ENCODE measurements at regions of chr11 and their contacts with region 1.

Region 1: GRCh38 chr11:20134991-20135736 is 25.1 kb downstream of the DBX1 start:
- DNase-seq: no peak
- H3K4me3 Mint-ChIP-seq: no peak overlapping the region
- H3K27ac Mint-ChIP-seq: no peak overlapping the region
- H3K4me1 Mint-ChIP-seq: peaks cover 10% of the 10 kb centered on the region
- H3K27me3 Mint-ChIP-seq: peaks cover 33% of the 10 kb centered on the region

Region 2: DNA sequence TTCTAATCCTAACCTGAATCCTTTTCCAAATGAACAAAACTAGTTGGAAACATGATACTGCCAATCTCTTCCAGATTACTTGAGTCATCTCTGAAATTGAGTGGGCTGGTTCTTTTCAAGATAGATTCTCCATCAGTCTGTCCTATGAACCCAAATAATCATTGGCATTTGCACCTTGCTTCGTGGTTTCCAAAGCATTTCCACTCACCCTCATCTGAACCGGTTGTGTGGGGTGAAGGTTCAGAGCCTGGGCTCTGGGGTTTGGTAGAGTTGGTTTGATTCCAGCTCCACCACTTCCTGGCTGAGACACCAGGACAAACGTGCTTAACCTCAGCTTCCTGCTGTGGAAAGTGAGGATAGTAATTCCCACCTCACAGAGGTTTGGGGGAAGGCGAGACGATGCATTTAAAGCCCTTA is 688.0 kb before region 1 on chr11:
- intact Hi-C with region 1: loop called (anchors 5 kb)
- DNase-seq: no peak
- H3K4me3 Mint-ChIP-seq: no peak overlapping the region
- H3K27ac Mint-ChIP-seq: no peak overlapping the region
- H3K4me1 Mint-ChIP-seq: peaks cover 7% of the 10 kb centered on the region
- H3K27me3 Mint-ChIP-seq: peaks cover 18% of the 10 kb centered on the region